Esophagus squamous epithelium (tissue), 5 donors: ENCODE measurements at regions of chr6 and their contacts with region 1.

Region 1: GRCh38 chr6:46850792-46851191 is 57.6 kb downstream of the MEP1A start:
- DNase-seq: no peak
- H3K4me3 ChIP-seq: no peak overlapping the region
- H3K27ac ChIP-seq: no peak overlapping the region
- H3K4me1 ChIP-seq: peaks cover 0 to 13% (median 4%) of the 10 kb centered on the region in 3 donors
- H3K27me3 ChIP-seq: no peaks in the 10 kb centered on the region
- CTCF ChIP-seq: no peak
- POLR2A ChIP-seq: no peak

Region 2: GRCh38 chr6:45843848-45844521 is 1006.8 kb before region 1 on chr6:
- intact Hi-C with region 1: no loop called
- DNase-seq: no peak
- H3K4me3 ChIP-seq: no peak overlapping the region
- H3K27ac ChIP-seq: no peak overlapping the region
- H3K4me1 ChIP-seq: no peaks in the 10 kb centered on the region
- H3K27me3 ChIP-seq: no peaks in the 10 kb centered on the region
- CTCF ChIP-seq: no peak
- POLR2A ChIP-seq: no peak

Region 3: GRCh38 chr6:46677314-46677654 is 173.5 kb before region 1 on chr6:
- intact Hi-C with region 1: no loop called
- DNase-seq: no peak
- H3K4me3 ChIP-seq: no peak overlapping the region
- H3K27ac ChIP-seq: no peak overlapping the region
- H3K4me1 ChIP-seq: no peaks in the 10 kb centered on the region
- H3K27me3 ChIP-seq: no peaks in the 10 kb centered on the region
- CTCF ChIP-seq: peak in 1 of 6 experiments; percentile 12
- POLR2A ChIP-seq: no peak

Region 4: DNA sequence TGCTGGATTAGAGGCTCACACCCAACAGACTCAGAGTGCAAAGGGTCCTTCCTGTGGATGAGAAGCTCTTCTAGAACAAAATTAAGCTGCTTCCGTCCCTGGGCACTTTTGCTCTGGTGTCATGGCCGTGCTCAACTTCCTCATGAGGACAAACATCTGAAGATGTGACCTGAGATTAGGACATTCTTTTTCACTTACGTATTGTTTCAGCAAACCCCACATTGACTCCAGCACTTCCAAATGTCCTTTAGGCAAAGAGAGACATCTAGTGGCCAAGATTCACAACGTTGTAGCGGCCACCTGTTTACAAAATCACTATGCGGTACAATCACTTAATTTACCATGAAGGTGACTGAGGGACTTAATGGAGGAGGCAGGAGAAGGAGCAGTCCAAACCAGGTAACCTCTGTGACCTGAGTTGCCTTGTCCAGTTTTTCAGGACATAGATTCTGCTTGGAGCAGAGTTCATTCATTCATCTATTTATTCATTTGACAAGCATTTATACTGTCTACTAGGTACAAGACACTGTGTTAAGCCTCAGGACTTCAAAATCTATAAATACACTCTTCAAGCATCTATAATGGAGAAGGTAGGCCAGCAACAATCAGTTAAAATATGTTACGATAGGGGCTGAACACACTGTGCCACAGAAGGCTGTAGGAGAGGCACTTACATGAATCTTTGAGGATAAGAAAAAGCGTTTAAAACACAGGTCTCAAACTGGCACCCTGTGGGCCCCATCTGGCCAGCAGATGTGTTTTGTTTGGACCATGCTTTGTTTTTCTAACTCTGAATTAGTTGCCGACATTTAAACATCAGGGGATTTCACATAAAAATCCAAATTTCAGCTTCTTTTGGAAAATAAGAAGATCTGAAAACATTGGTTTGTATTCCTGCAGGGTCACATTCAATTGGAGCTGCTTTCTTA is 197.0 kb after region 1 on chr6:
- intact Hi-C with region 1: loop called (anchors 10 kb)
- DNase-seq: no peak
- H3K4me3 ChIP-seq: no peak overlapping the region
- H3K27ac ChIP-seq: peak overlapping the region in 3 of 4 donors; percentile 2 to 18 (median 12)
- H3K4me1 ChIP-seq: peaks cover 4 to 35% (median 10%) of the 10 kb centered on the region in 3 donors
- H3K27me3 ChIP-seq: no peaks in the 10 kb centered on the region
- CTCF ChIP-seq: peak; percentile 36 to 88 (median 76)
- POLR2A ChIP-seq: no peak

Region 5: GRCh38 chr6:47235964-47236760 is 385.4 kb after region 1 on chr6:
- intact Hi-C with region 1: no loop called
- DNase-seq: no peak
- H3K4me3 ChIP-seq: no peak overlapping the region
- H3K27ac ChIP-seq: peak overlapping the region in 1 of 4 donors; percentile 11
- H3K4me1 ChIP-seq: peaks cover 0 to 30% (median 8%) of the 10 kb centered on the region in 3 donors
- H3K27me3 ChIP-seq: no peaks in the 10 kb centered on the region
- CTCF ChIP-seq: no peak
- POLR2A ChIP-seq: no peak